Activated T-helper 1 cell treated with anti-CD3 and anti-CD28 coated beads, Interleukin-12 subunit alpha, Interleukin-12 subunit beta, Interleukin-2, Interleukin-4 antibody, amounts not matched to agents 30 ng/mL and 10 ng/mL and 1 ng/mL, durations not matched to agents 14 hours and 24 hours and 36 hours (primary cell): ENCODE measurements at regions of chr1 and their contacts with region 1.

Region 1: GRCh38 chr1:158998781-158999161 is 10.9 kb upstream of the IFI16 start:
- DNase-seq: peak; percentile 40
- H3K4me3 Mint-ChIP-seq: no peak overlapping the region
- H3K27ac Mint-ChIP-seq: no peak overlapping the region
- H3K4me1 Mint-ChIP-seq: peaks cover 38% of the 10 kb centered on the region
- H3K27me3 Mint-ChIP-seq: no peaks in the 10 kb centered on the region

Region 2: GRCh38 chr1:158329733-158330132 is 669.0 kb before region 1 on chr1:
- intact Hi-C with region 1: loop called (anchors 5 kb)
- DNase-seq: no peak
- H3K4me3 Mint-ChIP-seq: no peak overlapping the region
- H3K27ac Mint-ChIP-seq: no peak overlapping the region
- H3K4me1 Mint-ChIP-seq: peaks cover 9% of the 10 kb centered on the region
- H3K27me3 Mint-ChIP-seq: peaks cover 2% of the 10 kb centered on the region

Region 3: DNA sequence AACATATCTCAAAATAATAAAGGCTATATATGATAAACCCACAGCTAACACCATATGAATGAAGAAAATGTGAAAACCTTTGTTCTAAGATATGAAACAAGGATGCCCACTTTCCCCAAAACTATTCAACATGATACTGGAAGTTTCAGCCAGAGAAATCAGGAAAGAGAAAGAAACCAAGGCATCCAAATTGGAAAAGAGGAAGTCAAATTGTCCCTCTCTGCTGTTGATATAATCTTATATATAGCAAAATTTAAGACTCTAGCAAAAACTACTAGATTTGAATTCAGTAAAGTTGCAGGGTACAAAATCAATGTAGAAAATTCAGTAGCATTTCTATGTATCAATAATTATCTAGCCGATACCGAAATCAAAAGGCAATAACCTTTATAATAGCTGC is 398.0 kb before region 1 on chr1:
- intact Hi-C with region 1: no loop called
- DNase-seq: no peak
- H3K4me3 Mint-ChIP-seq: no peak overlapping the region
- H3K27ac Mint-ChIP-seq: no peak overlapping the region
- H3K4me1 Mint-ChIP-seq: no peaks in the 10 kb centered on the region
- H3K27me3 Mint-ChIP-seq: peaks cover 4% of the 10 kb centered on the region

Region 4: GRCh38 chr1:158716335-158716734 is 282.4 kb before region 1 on chr1:
- intact Hi-C with region 1: loop called (anchors 10 kb)
- DNase-seq: no peak
- H3K4me3 Mint-ChIP-seq: no peak overlapping the region
- H3K27ac Mint-ChIP-seq: peak overlapping the region; percentile 56
- H3K4me1 Mint-ChIP-seq: no peaks in the 10 kb centered on the region
- H3K27me3 Mint-ChIP-seq: peaks cover 8% of the 10 kb centered on the region

Region 5: GRCh38 chr1:158819461-158820443 is 179.0 kb before region 1 on chr1:
- intact Hi-C with region 1: loop called (anchors 1 kb)
- DNase-seq: no peak
- H3K4me3 Mint-ChIP-seq: peak overlapping the region; percentile 47
- H3K27ac Mint-ChIP-seq: peak overlapping the region; percentile 79
- H3K4me1 Mint-ChIP-seq: peaks cover 31% of the 10 kb centered on the region
- H3K27me3 Mint-ChIP-seq: peaks cover 6% of the 10 kb centered on the region